Psoas muscle (tissue), 8 donors: ENCODE measurements at regions of chr11 and their contacts with region 1.

Region 1: DNA sequence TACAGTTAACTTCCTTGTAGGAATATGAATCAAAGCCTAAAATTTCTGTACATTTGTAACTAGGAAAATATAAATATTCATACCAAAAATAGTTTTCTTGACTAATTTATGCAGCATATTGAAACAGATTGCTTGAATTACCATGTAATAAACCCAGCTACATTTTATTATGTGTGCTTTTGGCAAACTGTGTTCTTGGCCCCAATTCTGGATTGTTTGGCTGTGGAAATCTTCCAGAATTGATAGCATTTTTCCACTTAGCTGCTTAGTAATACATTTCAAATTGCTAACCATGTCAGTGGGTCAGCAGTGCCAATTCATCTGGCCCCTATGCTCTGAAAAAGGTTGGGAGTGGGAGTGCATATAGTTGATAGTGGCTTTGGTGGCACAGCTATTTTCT is 32.3 kb downstream of the PDHX start:
- DNase-seq: no peak
- ATAC-seq: no peak
- H3K4me3 ChIP-seq: no peak overlapping the region
- H3K27ac ChIP-seq: no peak overlapping the region
- H3K4me1 ChIP-seq: no peaks in the 10 kb centered on the region
- H3K27me3 ChIP-seq: no peaks in the 10 kb centered on the region
- CTCF ChIP-seq: no peak

Region 2: DNA sequence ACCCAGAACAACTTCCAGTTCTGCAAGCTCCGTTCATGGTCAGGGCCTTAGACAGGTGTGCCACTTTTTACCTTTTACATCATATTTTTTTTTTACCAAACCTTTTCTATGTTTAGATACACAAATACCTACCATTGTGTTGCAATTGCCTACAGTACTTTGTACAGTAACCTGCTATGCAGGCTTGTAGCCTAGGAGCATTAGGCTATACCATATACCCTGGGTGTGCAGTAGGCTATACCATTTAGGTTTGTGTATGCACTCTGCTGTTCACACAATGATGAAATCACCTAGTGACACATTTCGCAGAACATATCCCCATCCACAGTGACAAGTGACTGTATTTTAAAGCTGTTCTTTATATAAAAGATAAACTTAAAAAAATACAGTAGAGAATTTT is 62.1 kb before region 1 on chr11:
- intact Hi-C with region 1: no loop called
- DNase-seq: no peak
- ATAC-seq: no peak
- H3K4me3 ChIP-seq: no peak overlapping the region
- H3K27ac ChIP-seq: no peak overlapping the region
- H3K4me1 ChIP-seq: peaks cover 4% of the 10 kb centered on the region
- H3K27me3 ChIP-seq: no peaks in the 10 kb centered on the region
- CTCF ChIP-seq: no peak

Region 3: DNA sequence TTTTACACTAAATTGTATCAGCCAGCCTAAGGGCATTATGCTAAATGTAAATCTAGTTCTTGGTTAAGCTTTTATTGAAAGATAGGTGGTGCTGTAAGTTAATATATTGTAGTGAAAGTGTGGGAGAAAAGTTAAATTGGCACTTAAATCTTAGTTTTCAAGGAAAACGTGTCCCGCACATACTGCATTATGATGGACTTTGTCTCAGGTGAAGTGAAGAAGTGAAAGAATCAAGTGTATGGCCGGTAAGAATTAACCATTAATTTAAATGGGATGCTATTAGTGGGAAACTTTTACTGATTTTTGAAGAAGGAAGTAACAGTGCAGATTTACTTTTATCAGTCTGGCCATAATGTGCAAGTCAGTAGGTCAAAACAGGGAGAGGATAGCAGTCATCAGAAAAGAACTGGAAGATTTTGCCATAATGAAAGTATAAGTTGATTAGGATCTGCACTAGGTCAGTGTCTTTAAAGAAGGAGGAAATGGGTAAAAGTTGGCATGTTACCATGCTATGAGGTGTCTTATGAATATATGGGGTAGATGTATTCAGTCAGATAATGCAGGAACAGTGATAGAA is 49.3 kb after region 1 on chr11:
- intact Hi-C with region 1: loop called in 1 of 2 experiments (anchors 5 kb)
- DNase-seq: no peak
- ATAC-seq: peak in 2 of 4 donors; percentile 47 to 57
- H3K4me3 ChIP-seq: no peak overlapping the region
- H3K27ac ChIP-seq: no peak overlapping the region
- H3K4me1 ChIP-seq: peaks cover 1% of the 10 kb centered on the region
- H3K27me3 ChIP-seq: no peaks in the 10 kb centered on the region
- CTCF ChIP-seq: peak; percentile 43